ENCODE measurements at regions of chr14 and their contacts with region 1.

Region 1: DNA sequence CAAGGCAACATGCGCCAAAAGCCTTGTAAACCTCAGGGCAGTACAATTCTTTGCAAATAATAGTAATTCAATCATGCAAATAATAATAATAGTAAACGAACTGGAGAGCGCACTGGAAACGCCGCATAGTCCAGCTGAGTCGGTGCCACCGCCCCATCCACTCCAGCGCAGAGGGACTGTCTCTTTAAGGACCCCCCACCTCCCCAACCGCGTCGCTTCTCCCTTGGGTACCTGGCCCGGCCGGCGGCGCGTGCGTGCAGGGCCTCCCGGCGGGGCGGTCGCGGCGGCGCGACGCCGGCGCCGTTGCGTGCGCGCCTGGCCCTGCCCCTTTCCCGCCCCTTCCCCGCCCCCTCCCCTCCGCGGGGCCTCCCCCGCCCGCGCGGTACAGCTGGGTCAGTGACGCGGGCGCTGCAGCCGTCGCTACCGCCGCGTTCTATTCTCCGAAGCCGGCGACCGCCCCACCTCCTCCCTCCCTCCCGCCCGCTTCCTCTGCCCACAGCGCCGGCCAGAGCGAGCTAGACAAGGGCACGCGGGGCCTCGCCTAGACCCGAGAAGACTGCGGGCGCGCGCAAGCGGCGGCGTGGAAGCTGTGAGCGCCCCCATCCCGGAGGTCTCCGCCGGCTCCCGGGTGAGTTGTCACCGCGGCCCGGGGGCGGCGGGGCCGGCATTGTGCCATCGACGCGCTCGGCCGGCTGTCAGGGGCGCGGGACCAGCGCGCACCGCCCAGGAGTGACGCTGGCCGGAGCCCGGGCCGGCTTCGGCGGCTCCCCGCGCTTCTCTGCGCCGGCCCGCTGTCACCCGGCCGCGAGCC is at the start of gene SUSD6:
- H3K4me3 Mint-ChIP-seq: peak within 1 kb of the TSS; percentile 90
- H3K27ac Mint-ChIP-seq: peak within 1 kb of the TSS; percentile 91
- H3K4me1 Mint-ChIP-seq: peaks cover 59% of the 10 kb centered on the region
- H3K27me3 Mint-ChIP-seq: no peaks in the 10 kb centered on the region

Region 2: DNA sequence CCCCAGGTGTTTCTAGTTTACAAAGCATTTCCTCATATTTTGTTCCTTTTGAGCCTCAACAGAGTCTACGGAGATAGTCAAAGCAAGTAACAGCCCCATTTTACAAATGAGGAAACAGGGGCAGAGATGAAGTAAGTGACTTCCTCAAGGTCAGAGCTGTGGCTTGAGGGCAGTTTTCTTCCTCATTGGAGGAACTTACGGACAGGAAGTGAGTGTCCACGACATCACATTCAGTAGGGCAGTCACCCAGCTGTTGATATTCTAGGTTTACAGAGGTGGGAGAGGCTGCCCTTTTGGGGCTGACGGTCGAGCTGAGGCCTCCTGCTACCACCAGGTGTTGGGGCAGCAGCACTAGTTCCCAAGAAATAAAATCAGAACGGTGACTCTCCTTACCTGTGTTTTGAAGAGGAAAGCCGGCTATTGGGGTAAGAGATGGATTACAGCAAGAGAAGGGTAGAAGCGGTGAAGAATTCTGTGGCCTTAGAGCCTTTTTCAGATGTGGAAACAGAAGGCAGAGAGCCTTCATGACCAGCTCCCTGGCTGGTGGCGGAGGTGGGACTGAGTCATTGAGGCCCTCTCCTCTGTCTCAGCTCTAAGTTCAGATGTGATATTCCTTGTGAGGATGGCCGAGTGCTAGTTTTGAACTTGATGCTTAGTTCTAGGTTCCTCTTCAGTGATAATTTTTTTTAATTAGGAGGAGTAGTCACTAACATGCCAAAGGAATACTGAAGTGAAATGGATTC is 41.7 kb after region 1 on chr14:
- intact Hi-C with region 1: loop called (anchors 2 kb)
- H3K4me3 Mint-ChIP-seq: peak overlapping the region; percentile 64
- H3K27ac Mint-ChIP-seq: peak overlapping the region; percentile 97
- H3K4me1 Mint-ChIP-seq: peaks cover 96% of the 10 kb centered on the region
- H3K27me3 Mint-ChIP-seq: no peaks in the 10 kb centered on the region

Region 3: GRCh38 chr14:69712599-69713088 is 101.2 kb after region 1 on chr14:
- intact Hi-C with region 1: loop called (anchors 5 kb)
- H3K4me3 Mint-ChIP-seq: peak overlapping the region; percentile 17
- H3K27ac Mint-ChIP-seq: peak overlapping the region; percentile 88
- H3K4me1 Mint-ChIP-seq: peaks cover 92% of the 10 kb centered on the region
- H3K27me3 Mint-ChIP-seq: no peaks in the 10 kb centered on the region

Region 4: DNA sequence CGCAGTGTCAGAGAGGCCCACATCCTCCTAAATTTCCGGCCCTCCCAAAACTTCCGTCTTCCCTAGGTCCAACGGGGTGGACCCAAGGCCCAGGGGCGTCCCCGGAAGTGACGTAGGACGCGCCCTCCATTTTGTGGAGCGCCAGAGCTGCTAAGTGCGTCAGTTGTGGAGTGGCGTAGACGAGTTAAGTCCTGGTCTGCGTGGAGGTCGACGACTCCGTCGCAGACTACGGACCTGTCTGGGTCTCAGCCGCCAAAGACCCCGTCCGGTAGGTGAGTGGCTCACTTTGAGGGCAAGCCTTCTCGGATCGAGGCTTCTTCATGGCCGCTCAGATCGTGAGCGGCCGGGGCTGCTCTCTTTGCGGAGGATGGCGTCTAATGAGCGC is 155.6 kb after region 1 on chr14 and contains the start of gene SRSF5:
- intact Hi-C with region 1: loop called (anchors 2 kb)
- H3K4me3 Mint-ChIP-seq: peak within 1 kb of the TSS; percentile 89
- H3K27ac Mint-ChIP-seq: peak within 1 kb of the TSS; percentile 100
- H3K4me1 Mint-ChIP-seq: peaks cover 53% of the 10 kb centered on the region
- H3K27me3 Mint-ChIP-seq: no peaks in the 10 kb centered on the region